ENCODE measurements at regions of chr11 and their contacts with region 1.

Region 1: DNA sequence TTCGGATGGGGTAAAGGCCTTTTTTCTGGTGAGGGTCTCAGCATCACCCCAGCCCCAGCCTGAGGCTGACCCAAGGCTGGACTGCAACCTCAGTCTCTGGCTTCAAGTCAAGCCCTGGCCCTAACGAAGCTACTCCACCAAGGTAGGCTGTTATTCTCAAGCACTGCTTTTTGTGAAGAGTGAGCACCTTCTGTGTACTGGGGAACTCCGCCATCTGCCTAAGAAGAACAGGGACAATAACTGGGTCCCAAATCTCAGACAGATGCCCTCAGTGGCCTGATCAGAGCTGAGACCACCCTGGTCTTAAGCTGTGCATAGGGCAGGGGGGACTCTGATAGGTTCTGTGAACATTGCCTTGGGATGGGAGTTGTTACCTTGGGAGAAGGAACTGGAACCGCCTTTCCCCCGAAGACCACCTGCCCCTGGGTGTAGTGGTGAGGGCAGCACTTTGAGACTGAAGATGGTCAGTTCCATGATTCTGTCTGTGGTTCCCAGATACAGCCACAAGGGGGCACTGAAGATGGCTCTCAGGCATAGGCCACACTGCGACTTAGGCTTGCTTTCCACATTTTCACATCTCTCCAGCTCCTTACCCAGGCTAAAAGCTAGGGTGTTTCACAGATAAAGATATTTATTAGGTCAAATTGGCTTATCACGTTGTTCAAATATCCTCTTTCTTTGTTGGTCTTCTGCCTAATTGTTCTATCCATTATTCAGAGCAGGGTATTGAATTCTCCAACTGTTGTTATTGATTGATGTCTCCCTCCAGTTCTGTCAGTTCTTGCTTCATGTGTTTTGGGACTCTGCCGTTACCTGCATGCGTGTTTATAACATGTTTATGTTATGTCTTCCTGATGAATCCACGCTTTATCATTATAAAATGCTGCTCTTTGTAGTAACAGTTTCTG is 11.8 kb upstream of the UVRAG start:
- DNase-seq: peak; percentile 92
- H3K4me3 Mint-ChIP-seq: no peak overlapping the region
- H3K27ac Mint-ChIP-seq: no peak overlapping the region
- H3K4me1 Mint-ChIP-seq: peaks cover 18% of the 10 kb centered on the region
- H3K27me3 Mint-ChIP-seq: no peaks in the 10 kb centered on the region

Region 2: GRCh38 chr11:75867775-75868374 is 64.7 kb after region 1 on chr11:
- intact Hi-C with region 1: loop called (anchors 1 kb)
- DNase-seq: peak; percentile 84
- H3K4me3 Mint-ChIP-seq: no peak overlapping the region
- H3K27ac Mint-ChIP-seq: no peak overlapping the region
- H3K4me1 Mint-ChIP-seq: peaks cover 5% of the 10 kb centered on the region
- H3K27me3 Mint-ChIP-seq: no peaks in the 10 kb centered on the region

Region 3: DNA sequence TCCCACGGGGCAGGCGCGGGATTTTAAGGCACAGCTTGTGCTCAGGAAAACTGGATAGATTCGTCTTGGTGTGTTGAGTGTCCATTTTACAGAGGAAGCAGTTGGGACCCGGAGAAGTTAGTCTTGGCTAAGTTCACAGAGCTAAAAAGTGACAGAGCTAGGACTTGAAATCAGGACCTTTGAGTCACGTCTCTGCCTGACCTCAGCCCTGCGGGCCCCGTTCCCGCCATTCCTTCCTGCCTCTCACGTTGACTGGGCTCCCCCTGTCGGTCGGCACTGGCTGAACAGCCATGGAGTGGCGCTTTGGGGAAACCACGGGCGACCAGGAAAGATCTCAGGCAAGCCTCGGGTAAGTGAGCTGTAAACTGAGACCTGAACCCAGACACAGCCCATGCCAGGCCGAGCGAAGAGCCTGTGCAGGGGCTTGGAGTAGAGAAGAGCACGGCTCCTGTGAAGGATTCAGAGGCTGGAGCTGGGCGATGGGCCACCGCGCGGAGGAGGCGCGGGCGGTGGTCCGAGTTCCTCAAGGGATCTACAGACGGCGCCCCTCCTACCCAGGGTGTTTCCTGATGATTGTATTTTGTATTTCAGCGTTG is 349.0 kb after region 1 on chr11:
- intact Hi-C with region 1: loop called (anchors 5 kb)
- DNase-seq: peak; percentile 95
- H3K4me3 Mint-ChIP-seq: peak overlapping the region; percentile 77
- H3K27ac Mint-ChIP-seq: no peak overlapping the region
- H3K4me1 Mint-ChIP-seq: peaks cover 17% of the 10 kb centered on the region
- H3K27me3 Mint-ChIP-seq: peaks cover 28% of the 10 kb centered on the region

Region 4: DNA sequence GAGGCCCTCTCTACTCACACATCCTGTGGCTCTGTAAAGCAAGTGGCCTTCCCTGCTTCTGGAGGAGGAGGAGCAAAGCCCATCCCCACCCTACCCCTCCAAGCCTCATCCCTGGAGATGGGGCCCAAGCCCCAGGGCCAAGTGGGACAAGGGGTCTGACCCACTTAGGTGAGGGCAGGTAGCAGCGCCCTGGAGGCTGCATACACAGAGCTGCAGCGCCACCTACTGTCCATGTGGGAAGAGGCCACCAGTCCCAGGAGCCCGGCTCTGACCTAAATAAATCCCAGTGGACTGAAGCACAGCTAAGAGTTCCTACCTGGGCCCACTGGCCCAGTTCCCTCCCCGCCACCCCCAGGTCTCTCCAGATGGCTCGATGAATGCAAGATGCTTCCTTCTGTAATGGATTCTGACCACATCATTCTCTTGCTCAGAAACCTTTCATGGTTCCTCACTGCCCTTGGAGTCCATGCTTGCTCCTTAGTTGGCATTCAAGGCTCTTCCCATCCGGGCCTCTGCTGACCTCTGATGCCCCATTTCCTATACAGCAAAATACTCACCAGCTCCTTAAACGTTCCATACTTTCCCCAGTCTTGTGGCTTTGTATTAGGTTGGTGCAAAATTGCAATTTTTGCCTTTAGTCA is 515.7 kb after region 1 on chr11:
- intact Hi-C with region 1: loop called (anchors 10 kb)
- DNase-seq: peak; percentile 94
- H3K4me3 Mint-ChIP-seq: no peak overlapping the region
- H3K27ac Mint-ChIP-seq: no peak overlapping the region
- H3K4me1 Mint-ChIP-seq: peaks cover 14% of the 10 kb centered on the region
- H3K27me3 Mint-ChIP-seq: peaks cover 42% of the 10 kb centered on the region